OCI-LY7 (cell line): ENCODE measurements at regions of chr16 and their contacts with region 1.

Region 1: DNA sequence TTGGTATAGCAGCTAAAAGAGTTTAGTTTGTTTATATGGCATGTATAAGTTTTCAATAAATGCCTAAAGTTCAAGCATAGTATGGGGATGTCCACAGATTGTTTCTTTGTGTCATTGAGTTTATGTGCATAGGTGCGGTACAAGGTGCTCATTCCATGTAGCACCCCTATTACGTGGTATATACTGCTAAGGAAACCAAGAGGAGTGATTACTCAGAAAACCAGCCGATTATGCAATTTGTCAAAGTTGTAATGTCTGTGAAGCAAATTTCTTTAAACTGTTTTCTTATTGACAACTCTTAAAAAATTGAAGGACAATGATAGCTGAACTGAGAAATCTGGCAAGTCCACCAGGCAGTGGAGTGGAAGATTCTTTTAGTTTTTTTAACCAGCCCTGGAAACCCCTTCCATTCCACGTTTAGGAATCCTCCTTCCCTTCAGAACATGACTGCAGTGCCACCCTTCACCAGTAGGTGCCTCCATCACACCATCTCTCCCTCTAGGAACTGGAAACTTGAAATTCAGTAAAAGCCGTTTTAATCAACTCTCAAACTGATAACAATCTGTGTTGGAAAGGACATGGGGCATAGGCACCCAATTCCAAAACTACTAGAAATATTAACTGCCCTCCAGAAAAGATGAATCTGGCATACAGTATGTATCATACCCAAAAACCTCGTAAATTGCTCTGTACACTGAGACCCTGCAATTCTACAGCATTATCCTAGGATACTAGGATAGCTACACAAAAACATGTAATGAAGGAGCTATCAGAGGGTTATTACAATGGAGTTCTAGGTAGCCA is 43.5 kb downstream of the REXO5 start:
- DNase-seq: peak; percentile 56
- H3K4me3 ChIP-seq: no peak overlapping the region
- H3K27ac ChIP-seq: no peak overlapping the region
- H3K4me1 ChIP-seq: no peaks in the 10 kb centered on the region
- CTCF ChIP-seq: peak; percentile 99

Region 2: GRCh38 chr16:20944861-20945574 is 95.2 kb after region 1 on chr16:
- CTCF ChIA-PET with region 1: no interaction called
- POLR2A ChIA-PET with region 1: no interaction called
- intact Hi-C with region 1: loop called (anchors 1 kb)
- DNase-seq: peak; percentile 29
- H3K4me3 ChIP-seq: no peak overlapping the region
- H3K27ac ChIP-seq: no peak overlapping the region
- H3K4me1 ChIP-seq: no peaks in the 10 kb centered on the region
- CTCF ChIP-seq: peak; percentile 65

Region 3: GRCh38 chr16:21083729-21084268 is 234.0 kb after region 1 on chr16:
- CTCF ChIA-PET with region 1: no interaction called
- POLR2A ChIA-PET with region 1: no interaction called
- intact Hi-C with region 1: loop called (anchors 1 kb)
- DNase-seq: peak; percentile 51
- H3K4me3 ChIP-seq: no peak overlapping the region
- H3K27ac ChIP-seq: no peak overlapping the region
- H3K4me1 ChIP-seq: no peaks in the 10 kb centered on the region
- CTCF ChIP-seq: peak; percentile 86